ENCODE measurements at regions of chr16 and their contacts with region 1.

Region 1: GRCh38 chr16:73068541-73069401 is 20.8 kb upstream of the ZFHX3 start:
- DNase-seq: peak; percentile 79 to 93
- ATAC-seq: peak; percentile 79
- H3K4me3 ChIP-seq: peak overlapping the region in 2 of 4 donors; percentile 13 to 59
- H3K27ac ChIP-seq: peak overlapping the region; percentile 89 to 99 (median 95)
- H3K4me1 ChIP-seq: peaks cover 51 to 60% of the 10 kb centered on the region in 2 donors
- H3K27me3 ChIP-seq: peaks cover 0 to 15% (median 5%) of the 10 kb centered on the region in 3 donors
- CTCF ChIP-seq: no peak
- POLR2A ChIP-seq: peak; percentile 62 to 77

Region 2: GRCh38 chr16:73058221-73058615 is 10.6 kb before region 1 on chr16:
- in situ Hi-C with region 1: no loop called
- intact Hi-C with region 1: loop called (anchors 2 kb)
- DNase-seq: no peak
- ATAC-seq: peak; percentile 26 to 37
- H3K4me3 ChIP-seq: peak overlapping the region; percentile 64 to 75 (median 72)
- H3K27ac ChIP-seq: peak overlapping the region; percentile 94 to 99 (median 99)
- H3K4me1 ChIP-seq: peaks cover 38 to 58% of the 10 kb centered on the region in 2 donors
- H3K27me3 ChIP-seq: peaks cover 0 to 10% (median 0%) of the 10 kb centered on the region in 3 donors
- CTCF ChIP-seq: no peak
- POLR2A ChIP-seq: no peak

Region 3: GRCh38 chr16:73179705-73180677 is 111.2 kb after region 1 on chr16:
- in situ Hi-C with region 1: loop called in 2 of 4 experiments (anchors 10 kb)
- intact Hi-C with region 1: no loop called
- DNase-seq: no peak
- ATAC-seq: no peak
- H3K4me3 ChIP-seq: no peak overlapping the region
- H3K27ac ChIP-seq: peak overlapping the region in 3 of 4 donors; percentile 0 to 25 (median 12)
- H3K4me1 ChIP-seq: no peaks in the 10 kb centered on the region
- H3K27me3 ChIP-seq: no peaks in the 10 kb centered on the region
- CTCF ChIP-seq: no peak
- POLR2A ChIP-seq: no peak

Region 4: GRCh38 chr16:73289232-73289631 is 220.5 kb after region 1 on chr16:
- in situ Hi-C with region 1: no loop called
- intact Hi-C with region 1: no loop called
- DNase-seq: no peak
- ATAC-seq: no peak
- H3K4me3 ChIP-seq: no peak overlapping the region
- H3K27ac ChIP-seq: no peak overlapping the region
- H3K4me1 ChIP-seq: no peaks in the 10 kb centered on the region
- H3K27me3 ChIP-seq: peaks cover 3 to 9% (median 7%) of the 10 kb centered on the region in 3 donors
- CTCF ChIP-seq: no peak
- POLR2A ChIP-seq: no peak

Region 5: DNA sequence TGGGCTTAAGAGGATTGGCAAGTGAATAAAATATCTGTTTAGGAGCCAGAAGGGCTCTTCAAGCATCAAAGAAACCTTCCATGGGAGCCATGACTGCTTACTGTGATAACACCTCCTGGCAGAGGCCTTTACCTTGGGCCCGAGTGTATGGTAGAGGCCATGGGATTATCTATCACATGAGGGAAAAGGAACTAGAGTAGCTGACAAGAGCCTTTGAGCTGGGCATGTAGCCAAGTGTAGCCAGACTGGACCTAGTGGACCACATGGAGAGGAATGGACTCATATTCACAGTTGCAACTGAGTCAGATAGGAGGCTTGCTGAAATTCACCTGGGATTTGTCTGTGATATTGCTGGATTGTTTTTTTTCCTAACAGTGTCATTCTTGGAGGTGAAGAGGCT is 255.1 kb after region 1 on chr16:
- in situ Hi-C with region 1: no loop called
- intact Hi-C with region 1: no loop called
- DNase-seq: peak; percentile 6 to 35
- ATAC-seq: no peak
- H3K4me3 ChIP-seq: no peak overlapping the region
- H3K27ac ChIP-seq: no peak overlapping the region
- H3K4me1 ChIP-seq: no peaks in the 10 kb centered on the region
- H3K27me3 ChIP-seq: no peaks in the 10 kb centered on the region
- CTCF ChIP-seq: no peak
- POLR2A ChIP-seq: no peak

Measured in gastrocnemius medialis (tissue), 4 donors.